Gastrocnemius medialis (tissue), 4 donors: ENCODE measurements at regions of chr10 and their contacts with region 1.

Region 1: DNA sequence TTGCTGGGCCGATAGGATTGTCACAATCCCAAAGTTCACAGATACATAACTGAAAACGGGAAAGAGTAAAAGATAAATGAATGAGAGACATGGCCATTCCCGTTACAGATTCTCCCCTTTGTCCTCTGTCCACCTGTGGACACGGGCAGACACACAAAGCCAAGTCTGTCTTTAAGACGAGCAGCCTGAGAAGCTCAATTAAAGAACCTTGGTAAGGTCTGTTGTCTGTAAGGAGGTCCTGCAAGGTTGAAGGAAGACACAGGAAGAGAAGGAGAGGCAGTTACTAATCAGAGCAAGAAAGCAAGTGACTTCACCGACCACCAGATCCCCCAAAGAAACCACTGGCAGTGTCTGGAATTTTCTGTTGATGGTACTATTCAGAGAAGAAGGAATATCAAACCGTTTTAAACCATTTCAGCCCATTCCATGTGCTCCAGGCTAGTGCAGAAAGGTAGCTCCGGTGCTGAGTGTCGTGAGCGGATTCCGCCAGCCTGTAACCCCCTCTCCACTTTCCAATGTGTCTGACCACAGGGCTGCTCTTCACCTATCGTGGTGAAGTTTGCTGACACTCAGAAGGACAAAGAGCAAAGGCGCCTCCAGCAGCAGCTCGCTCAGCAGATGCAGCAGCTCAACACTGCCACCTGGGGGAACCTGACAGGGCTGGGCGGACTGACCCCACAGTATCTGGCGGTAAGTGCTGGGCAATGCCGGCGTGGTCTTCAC is 252.6 kb downstream of the CELF2 start:
- DNase-seq: peak in 1 of 2 donors; percentile 55
- ATAC-seq: peak; percentile 54 to 77
- H3K4me3 ChIP-seq: no peak overlapping the region
- H3K27ac ChIP-seq: no peak overlapping the region
- H3K4me1 ChIP-seq: peaks cover 0 to 2% of the 10 kb centered on the region in 2 donors
- H3K27me3 ChIP-seq: no peaks in the 10 kb centered on the region
- CTCF ChIP-seq: peak; percentile 41 to 83 (median 68)
- POLR2A ChIP-seq: no peak

Region 2: GRCh38 chr10:9331583-9332008 is 1938.7 kb before region 1 on chr10:
- in situ Hi-C with region 1: no loop called
- intact Hi-C with region 1: loop called (anchors 10 kb)
- DNase-seq: no peak
- ATAC-seq: peak; percentile 16 to 65
- H3K4me3 ChIP-seq: no peak overlapping the region
- H3K27ac ChIP-seq: no peak overlapping the region
- H3K4me1 ChIP-seq: no peaks in the 10 kb centered on the region
- H3K27me3 ChIP-seq: no peaks in the 10 kb centered on the region
- CTCF ChIP-seq: peak; percentile 28 to 74 (median 66)
- POLR2A ChIP-seq: no peak